ENCODE measurements at regions of chr3 and their contacts with region 1.

Region 1: GRCh38 chr3:46538803-46539442 is 27.2 kb downstream of the LRRC2 start:
- DNase-seq: peak; percentile 96
- ATAC-seq: peak; percentile 85
- H3K4me3 ChIP-seq: peak overlapping the region; percentile 6 to 69 (median 39)
- H3K4me3 Mint-ChIP-seq: peak overlapping the region; percentile 80
- H3K27ac ChIP-seq: peak overlapping the region; percentile 89
- H3K27ac Mint-ChIP-seq: peak overlapping the region; percentile 93
- H3K4me1 ChIP-seq: peaks cover 56 to 67% of the 10 kb centered on the region in 2 donors
- H3K4me1 Mint-ChIP-seq: peaks cover 68% of the 10 kb centered on the region
- H3K27me3 ChIP-seq: peaks cover 0 to 13% (median 5%) of the 10 kb centered on the region in 4 experiments
- H3K27me3 Mint-ChIP-seq: peaks cover 23% of the 10 kb centered on the region
- CTCF ChIP-seq: no peak

Region 2: GRCh38 chr3:46098319-46098761 is 440.6 kb before region 1 on chr3:
- CTCF ChIA-PET with region 1: no interaction called
- POLR2A ChIA-PET with region 1: no interaction called
- intact Hi-C with region 1: loop called (anchors 5 kb)
- DNase-seq: peak; percentile 58
- ATAC-seq: peak; percentile 13
- H3K4me3 ChIP-seq: peak overlapping the region in 3 of 5 experiments; percentile 27 to 46 (median 37)
- H3K4me3 Mint-ChIP-seq: peak overlapping the region; percentile 73
- H3K27ac ChIP-seq: peak overlapping the region; percentile 30 to 65
- H3K27ac Mint-ChIP-seq: peak overlapping the region; percentile 95
- H3K4me1 ChIP-seq: peaks cover 61 to 68% of the 10 kb centered on the region in 2 donors
- H3K4me1 Mint-ChIP-seq: peaks cover 69% of the 10 kb centered on the region
- H3K27me3 ChIP-seq: no peaks in the 10 kb centered on the region
- H3K27me3 Mint-ChIP-seq: no peaks in the 10 kb centered on the region
- CTCF ChIP-seq: no peak

Region 3: GRCh38 chr3:46378426-46378942 is 160.4 kb before region 1 on chr3:
- CTCF ChIA-PET with region 1: interaction called, 5 read pairs
- POLR2A ChIA-PET with region 1: no interaction called
- intact Hi-C with region 1: loop called (anchors 1 kb)
- DNase-seq: peak; percentile 64
- ATAC-seq: peak; percentile 51
- H3K4me3 ChIP-seq: no peak overlapping the region
- H3K4me3 Mint-ChIP-seq: no peak overlapping the region
- H3K27ac ChIP-seq: no peak overlapping the region
- H3K27ac Mint-ChIP-seq: peak overlapping the region; percentile 5
- H3K4me1 ChIP-seq: peaks cover 24 to 30% of the 10 kb centered on the region in 2 donors
- H3K4me1 Mint-ChIP-seq: peaks cover 41% of the 10 kb centered on the region
- H3K27me3 ChIP-seq: peaks cover 0 to 2% (median 0%) of the 10 kb centered on the region in 4 experiments
- H3K27me3 Mint-ChIP-seq: peaks cover 3% of the 10 kb centered on the region
- CTCF ChIP-seq: peak; percentile 72

Region 4: DNA sequence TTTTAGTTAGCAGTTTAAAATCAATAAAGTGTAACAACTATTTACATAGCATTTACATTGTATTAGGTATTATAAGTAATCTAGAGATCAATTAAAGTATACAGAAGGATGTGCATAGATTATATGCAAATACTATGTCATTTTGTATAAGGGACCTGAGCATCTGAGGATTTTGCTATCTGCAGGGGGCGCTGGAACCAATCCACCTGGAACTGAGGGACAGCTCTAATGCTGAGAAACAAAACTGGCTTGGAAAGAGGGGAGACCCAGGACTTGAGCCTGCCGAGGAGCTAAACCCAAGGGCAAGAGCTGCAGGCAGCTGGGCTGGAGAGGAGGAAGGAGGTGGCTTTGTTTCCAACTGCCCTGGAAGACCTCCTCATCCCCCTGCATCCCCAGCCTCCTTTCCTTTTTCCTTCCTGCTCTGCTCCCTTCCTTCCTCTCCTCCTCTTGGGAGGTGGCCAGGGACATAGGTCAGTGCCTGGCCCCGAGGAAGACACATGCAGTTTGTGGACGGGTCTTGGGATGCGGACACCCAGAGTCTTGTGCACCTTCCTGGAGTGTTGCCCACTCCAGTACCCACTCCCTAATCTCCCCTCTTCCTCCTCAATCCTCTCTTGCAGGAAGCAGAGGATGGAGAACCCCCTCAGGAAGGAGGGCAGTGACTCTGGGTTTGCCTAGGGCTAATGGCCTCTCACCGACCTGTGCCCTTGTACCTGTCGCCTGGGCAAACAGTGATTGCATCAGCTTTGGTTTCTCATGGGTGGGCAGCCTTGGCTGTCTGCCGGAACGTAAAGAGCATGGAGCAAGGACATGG is 42.0 kb before region 1 on chr3:
- CTCF ChIA-PET with region 1: interaction called, 32 read pairs
- POLR2A ChIA-PET with region 1: interaction called, 4 read pairs
- intact Hi-C with region 1: no loop called
- DNase-seq: peak; percentile 55
- ATAC-seq: peak; percentile 54
- H3K4me3 ChIP-seq: no peak overlapping the region
- H3K4me3 Mint-ChIP-seq: no peak overlapping the region
- H3K27ac ChIP-seq: no peak overlapping the region
- H3K27ac Mint-ChIP-seq: no peak overlapping the region
- H3K4me1 ChIP-seq: peaks cover 23 to 26% of the 10 kb centered on the region in 2 donors
- H3K4me1 Mint-ChIP-seq: peaks cover 36% of the 10 kb centered on the region
- H3K27me3 ChIP-seq: no peaks in the 10 kb centered on the region
- H3K27me3 Mint-ChIP-seq: no peaks in the 10 kb centered on the region
- CTCF ChIP-seq: peak; percentile 38

Region 5: DNA sequence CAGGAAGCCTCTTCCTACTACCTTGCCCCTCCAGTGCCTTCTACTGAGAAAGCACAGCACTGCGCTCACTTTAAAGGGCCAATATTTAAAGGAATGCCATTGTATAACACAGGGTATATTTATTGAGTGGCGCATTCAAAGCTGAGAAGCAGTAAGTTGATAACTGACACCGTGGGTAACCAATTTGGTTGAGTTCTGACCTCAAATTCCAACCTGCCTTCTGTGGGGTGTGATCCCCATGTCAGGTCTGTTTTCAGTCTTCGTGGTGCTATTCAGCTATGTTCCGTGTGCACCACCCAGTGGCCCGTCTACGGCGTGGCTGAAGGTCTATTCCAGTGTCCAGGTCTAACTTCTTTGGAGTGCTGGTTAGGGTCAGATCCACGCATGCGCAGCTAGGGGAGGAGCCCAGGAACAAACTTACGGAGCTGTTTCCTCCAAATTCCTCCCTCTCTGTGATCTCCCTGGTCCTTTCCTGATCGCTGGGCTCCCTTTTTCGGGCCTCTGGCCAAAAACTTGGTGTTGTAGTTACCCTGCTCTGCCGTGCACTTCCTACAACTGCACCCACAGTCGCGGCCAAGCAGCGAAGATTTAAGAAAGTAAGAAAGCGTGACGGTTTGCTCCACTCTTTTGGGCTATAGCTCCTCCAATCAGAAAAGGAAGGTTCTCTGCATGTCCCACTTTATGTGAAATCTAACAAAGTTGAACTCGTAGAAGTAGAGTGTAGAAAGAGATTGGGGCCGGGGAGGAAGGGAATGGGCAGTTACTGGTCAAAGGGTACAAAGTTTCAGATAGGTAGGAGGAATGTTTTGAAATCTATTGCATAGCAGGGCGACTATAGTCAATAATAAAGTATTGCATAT is 19.5 kb after region 1 on chr3:
- CTCF ChIA-PET with region 1: interaction called, 67 read pairs
- POLR2A ChIA-PET with region 1: interaction called, 6 read pairs
- intact Hi-C with region 1: loop called (anchors 1 kb)
- DNase-seq: peak; percentile 88
- ATAC-seq: peak; percentile 99
- H3K4me3 ChIP-seq: peak overlapping the region in 3 of 5 experiments; percentile 27 to 37 (median 37)
- H3K4me3 Mint-ChIP-seq: peak overlapping the region; percentile 74
- H3K27ac ChIP-seq: no peak overlapping the region
- H3K27ac Mint-ChIP-seq: peak overlapping the region; percentile 21
- H3K4me1 ChIP-seq: peaks cover 13% of the 10 kb centered on the region in 2 donors
- H3K4me1 Mint-ChIP-seq: peaks cover 14% of the 10 kb centered on the region
- H3K27me3 ChIP-seq: no peaks in the 10 kb centered on the region
- H3K27me3 Mint-ChIP-seq: peaks cover 6% of the 10 kb centered on the region
- CTCF ChIP-seq: peak; percentile 85

Region 6: DNA sequence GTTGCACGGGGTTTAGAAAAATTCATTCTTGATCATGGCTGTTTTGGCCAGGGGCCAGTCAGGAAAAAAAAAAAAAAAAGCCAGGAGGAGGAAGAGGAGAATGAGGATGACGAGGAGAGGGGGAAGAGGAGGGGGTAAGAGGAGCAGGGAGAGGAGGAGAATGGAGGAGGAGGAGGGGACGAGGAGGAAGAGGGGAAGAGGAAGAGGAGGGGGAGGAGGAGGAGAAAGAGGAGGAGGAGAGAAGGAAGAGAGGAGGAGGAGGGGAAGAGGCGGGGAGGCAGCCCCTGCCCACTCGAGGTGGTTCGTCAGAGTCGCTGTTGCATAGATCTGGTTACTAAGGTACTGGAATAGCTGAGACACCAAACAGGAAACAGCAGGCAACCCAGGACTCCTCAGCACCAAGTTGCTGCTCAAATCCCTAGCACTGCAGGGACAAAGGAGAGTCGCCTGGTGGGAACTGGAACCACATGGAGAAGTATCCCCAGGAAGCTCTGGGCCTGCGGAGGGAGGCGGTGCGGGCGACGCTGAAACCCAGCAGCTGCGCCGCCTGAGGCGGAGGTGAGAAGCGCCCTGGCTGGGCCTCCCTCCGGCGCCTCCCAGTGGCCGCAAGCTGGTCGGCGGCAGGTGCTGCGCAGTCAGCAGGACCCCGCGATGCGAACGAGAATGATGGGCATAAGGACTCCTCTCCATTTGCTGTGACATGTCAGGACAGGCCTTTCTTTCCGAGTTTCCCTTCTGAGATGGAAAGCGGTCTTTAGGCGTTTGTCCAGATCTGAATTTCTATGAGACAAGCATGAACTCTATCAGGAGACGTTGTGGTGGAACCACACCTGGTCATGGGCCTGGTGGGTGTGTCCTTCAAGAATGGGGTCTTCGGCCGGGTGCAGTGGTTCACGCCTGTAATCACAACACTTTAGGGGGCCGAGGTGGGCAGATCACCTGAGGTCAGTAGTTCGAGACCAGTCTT is 90.9 kb after region 1 on chr3:
- CTCF ChIA-PET with region 1: interaction called, 27 read pairs
- POLR2A ChIA-PET with region 1: interaction called, 3 read pairs
- intact Hi-C with region 1: no loop called
- DNase-seq: peak; percentile 85
- ATAC-seq: peak; percentile 98
- H3K4me3 ChIP-seq: peak overlapping the region in 4 of 5 experiments; percentile 7 to 47 (median 44)
- H3K4me3 Mint-ChIP-seq: peak overlapping the region; percentile 76
- H3K27ac ChIP-seq: no peak overlapping the region
- H3K27ac Mint-ChIP-seq: peak overlapping the region; percentile 46
- H3K4me1 ChIP-seq: peaks cover 4 to 11% of the 10 kb centered on the region in 2 donors
- H3K4me1 Mint-ChIP-seq: peaks cover 14% of the 10 kb centered on the region
- H3K27me3 ChIP-seq: no peaks in the 10 kb centered on the region
- H3K27me3 Mint-ChIP-seq: no peaks in the 10 kb centered on the region
- CTCF ChIP-seq: peak; percentile 98

Region 7: DNA sequence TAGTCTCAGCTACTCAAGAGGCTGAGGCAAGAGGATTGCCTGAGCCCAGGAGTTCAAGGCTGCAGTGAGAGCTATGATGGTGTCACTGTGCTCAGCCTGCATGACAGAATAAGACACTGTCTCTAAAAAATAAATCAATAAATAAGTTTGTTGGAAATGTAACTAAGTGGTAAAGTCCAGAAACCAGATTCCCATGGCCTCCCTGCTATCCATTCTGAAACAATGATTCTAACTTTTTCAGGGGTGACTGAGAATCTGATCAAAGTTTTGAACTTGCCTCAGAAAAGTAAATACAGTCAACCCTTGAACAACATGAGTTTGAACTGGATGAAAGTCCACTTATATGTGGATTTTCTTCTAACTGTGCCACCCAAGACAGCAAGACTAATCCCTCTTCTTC is 526.8 kb after region 1 on chr3:
- CTCF ChIA-PET with region 1: no interaction called
- POLR2A ChIA-PET with region 1: no interaction called
- intact Hi-C with region 1: no loop called
- DNase-seq: no peak
- ATAC-seq: no peak
- H3K4me3 ChIP-seq: no peak overlapping the region
- H3K4me3 Mint-ChIP-seq: no peak overlapping the region
- H3K27ac ChIP-seq: no peak overlapping the region
- H3K27ac Mint-ChIP-seq: no peak overlapping the region
- H3K4me1 ChIP-seq: no peaks in the 10 kb centered on the region
- H3K4me1 Mint-ChIP-seq: peaks cover 4% of the 10 kb centered on the region
- H3K27me3 ChIP-seq: no peaks in the 10 kb centered on the region
- H3K27me3 Mint-ChIP-seq: no peaks in the 10 kb centered on the region
- CTCF ChIP-seq: no peak